Heart right ventricle (tissue), 16 donors: ENCODE measurements at regions of chr2 and their contacts with region 1.

Region 1: GRCh38 chr2:110940376-110940910 is 180.3 kb upstream of the BCL2L11 start:
- DNase-seq: no peak
- ATAC-seq: no peak
- H3K4me3 ChIP-seq: no peak overlapping the region
- H3K27ac ChIP-seq: no peak overlapping the region
- H3K4me1 ChIP-seq: no peaks in the 10 kb centered on the region
- H3K27me3 ChIP-seq: peaks cover 0 to 10% (median 0%) of the 10 kb centered on the region in 7 donors
- CTCF ChIP-seq: no peak

Region 2: GRCh38 chr2:110955556-110955955 is 15.1 kb after region 1 on chr2:
- intact Hi-C with region 1: loop called in 1 of 10 experiments (anchors 1 kb)
- DNase-seq: no peak
- ATAC-seq: no peak
- H3K4me3 ChIP-seq: no peak overlapping the region
- H3K27ac ChIP-seq: no peak overlapping the region
- H3K4me1 ChIP-seq: no peaks in the 10 kb centered on the region
- H3K27me3 ChIP-seq: peaks cover 0 to 8% (median 0%) of the 10 kb centered on the region in 7 donors
- CTCF ChIP-seq: no peak

Region 3: GRCh38 chr2:111194835-111195621 is 254.6 kb after region 1 on chr2:
- intact Hi-C with region 1: no loop called
- DNase-seq: no peak
- ATAC-seq: no peak
- H3K4me3 ChIP-seq: no peak overlapping the region
- H3K27ac ChIP-seq: no peak overlapping the region
- H3K4me1 ChIP-seq: no peaks in the 10 kb centered on the region
- H3K27me3 ChIP-seq: no peaks in the 10 kb centered on the region
- CTCF ChIP-seq: no peak